Activated CD4-positive, alpha-beta T cell treated with anti-CD3 and anti-CD28 coated beads, Interleukin-2, amount 10 ng/mL, durations not matched to agents 24 days and 14 days (primary cell): ENCODE measurements at regions of chr15 and their contacts with region 1.

Region 1: GRCh38 chr15:92808978-92809879 is 90.9 kb upstream of the CHD2 start:
- DNase-seq: peak; percentile 100
- H3K4me3 Mint-ChIP-seq: peak overlapping the region; percentile 89
- H3K27ac Mint-ChIP-seq: peak overlapping the region; percentile 98
- H3K4me1 Mint-ChIP-seq: peaks cover 45% of the 10 kb centered on the region
- H3K27me3 Mint-ChIP-seq: no peaks in the 10 kb centered on the region

Region 2: DNA sequence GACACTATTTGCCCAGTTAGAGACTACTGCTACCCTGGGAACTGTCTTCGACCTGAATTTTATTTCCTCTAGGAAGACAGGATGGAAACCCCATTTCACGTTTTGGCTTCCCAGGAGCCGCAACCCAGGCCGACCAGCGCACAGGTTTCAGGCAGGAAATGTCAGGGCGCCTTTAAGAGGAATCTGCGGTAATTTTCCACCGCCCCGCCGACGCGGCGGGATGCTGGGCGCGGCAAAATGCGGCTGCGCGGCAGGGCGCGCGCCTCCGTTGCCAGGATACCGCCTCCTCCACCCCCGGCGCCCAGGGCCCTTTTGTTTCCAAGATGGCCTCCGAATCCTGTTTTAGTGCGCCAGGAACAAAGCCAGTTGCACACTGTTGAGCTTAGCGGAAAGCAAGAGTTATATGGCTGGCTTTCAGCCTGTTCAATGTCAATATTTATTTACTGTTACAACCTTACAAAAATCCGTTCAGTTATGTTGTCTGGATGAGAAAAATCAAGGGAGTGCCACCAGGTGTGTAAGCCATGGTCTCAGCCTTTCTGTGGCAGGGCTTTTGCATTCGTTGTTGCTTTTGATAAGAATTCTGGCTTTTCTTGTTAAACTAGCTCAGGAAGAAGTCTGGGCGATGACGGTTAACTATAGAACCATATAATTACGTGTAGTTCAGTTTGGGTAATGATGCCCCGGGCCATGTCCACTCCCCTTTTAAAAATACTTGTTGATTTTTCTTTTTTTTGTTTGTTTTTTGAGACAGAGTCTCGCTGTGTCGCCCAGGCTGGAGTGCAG is 11.2 kb after region 1 on chr15:
- intact Hi-C with region 1: loop called (anchors 1 kb)
- DNase-seq: peak; percentile 97
- H3K4me3 Mint-ChIP-seq: peak overlapping the region; percentile 90
- H3K27ac Mint-ChIP-seq: peak overlapping the region; percentile 96
- H3K4me1 Mint-ChIP-seq: peaks cover 52% of the 10 kb centered on the region
- H3K27me3 Mint-ChIP-seq: no peaks in the 10 kb centered on the region

Region 3: DNA sequence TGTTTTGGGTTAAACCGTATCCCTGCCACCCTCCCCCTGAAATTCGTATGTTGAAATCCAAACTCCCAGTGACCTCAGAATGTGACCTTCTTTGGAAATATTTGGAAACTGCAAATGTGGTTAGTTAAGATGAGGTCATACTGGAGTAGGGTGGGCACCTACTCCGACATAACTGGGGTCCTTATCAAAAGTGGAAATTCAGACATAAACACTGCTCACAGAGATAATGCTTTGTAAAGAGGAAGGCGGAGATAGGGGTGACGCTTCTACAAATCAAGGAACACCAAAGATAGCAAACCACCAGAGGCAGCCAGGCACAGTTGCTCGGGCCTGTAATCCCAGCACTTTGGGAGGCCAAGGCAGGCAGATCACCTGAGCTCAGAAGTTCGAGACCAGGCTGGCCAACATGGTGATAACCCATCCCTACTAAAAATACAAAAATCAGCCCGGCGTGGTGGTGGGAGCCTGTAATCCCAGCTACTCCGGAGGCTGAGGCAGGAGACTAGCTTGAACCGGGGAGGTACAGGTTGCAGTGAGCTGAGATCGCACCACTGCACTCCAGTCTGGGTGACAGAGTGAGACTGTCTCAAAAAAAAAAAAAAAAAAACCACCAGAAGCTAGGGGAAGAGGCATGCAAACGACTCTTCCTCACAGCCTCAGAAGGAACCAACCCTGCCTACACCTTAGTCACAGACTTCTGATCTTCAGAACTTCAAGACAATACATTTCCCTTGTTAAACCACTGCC is 39.8 kb after region 1 on chr15:
- intact Hi-C with region 1: loop called (anchors 2 kb)
- DNase-seq: peak; percentile 80
- H3K4me3 Mint-ChIP-seq: peak overlapping the region; percentile 40
- H3K27ac Mint-ChIP-seq: peak overlapping the region; percentile 82
- H3K4me1 Mint-ChIP-seq: peaks cover 46% of the 10 kb centered on the region
- H3K27me3 Mint-ChIP-seq: no peaks in the 10 kb centered on the region

Region 4: DNA sequence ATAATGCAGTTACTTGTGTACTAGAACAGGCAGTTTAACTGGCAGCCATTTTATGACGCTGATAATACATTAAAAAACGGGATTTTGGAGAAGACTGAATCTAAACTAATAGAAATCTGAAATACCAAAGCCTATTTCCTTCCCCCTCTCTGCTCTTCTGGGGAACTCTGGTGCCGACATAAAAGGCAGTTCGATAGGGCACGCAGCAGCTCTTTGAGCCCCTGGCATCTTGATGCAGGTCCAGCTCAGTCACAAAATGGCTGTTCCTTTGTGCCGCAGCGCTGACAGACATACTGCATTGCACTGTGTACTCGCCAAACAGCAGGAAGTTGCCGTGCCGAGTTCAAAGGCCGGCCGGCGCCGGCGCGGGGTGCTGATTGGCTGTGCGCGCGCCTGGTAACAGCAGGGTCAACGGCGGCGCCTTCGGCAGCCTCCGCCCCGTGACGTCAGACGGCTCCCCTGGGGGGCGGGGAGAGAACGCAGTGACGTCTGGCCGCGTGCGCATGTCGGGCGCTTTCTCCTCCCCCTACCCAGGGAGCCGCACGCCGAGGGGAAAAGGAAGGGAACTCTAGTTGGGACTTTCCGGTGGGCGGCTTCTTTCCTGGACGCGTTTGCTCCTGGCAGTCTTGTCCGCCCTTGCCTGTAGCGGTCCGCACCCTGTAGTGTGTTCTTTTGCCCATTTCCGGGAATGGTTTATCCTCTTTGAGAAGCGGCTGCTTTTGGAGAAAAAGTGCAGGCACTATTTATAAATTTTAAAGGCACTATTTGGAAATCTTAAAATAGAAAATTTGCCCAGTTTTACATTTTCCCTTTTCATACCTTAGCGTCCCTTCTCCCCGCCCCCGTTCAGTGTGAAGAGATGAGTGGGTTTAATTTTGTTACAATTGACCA is 95.0 kb after region 1 on chr15:
- intact Hi-C with region 1: loop called (anchors 1 kb)
- DNase-seq: peak; percentile 100
- H3K4me3 Mint-ChIP-seq: peak overlapping the region; percentile 89
- H3K27ac Mint-ChIP-seq: peak overlapping the region; percentile 100
- H3K4me1 Mint-ChIP-seq: peaks cover 56% of the 10 kb centered on the region
- H3K27me3 Mint-ChIP-seq: no peaks in the 10 kb centered on the region